ENCODE measurements at regions of chr7 and their contacts with region 1.

Region 1: GRCh38 chr7:79452032-79452494 is 1.4 kb downstream of the MAGI2 start:
- DNase-seq: peak; percentile 89 to 95 (median 95)
- ATAC-seq: peak; percentile 86 to 88
- H3K4me3 ChIP-seq: peak overlapping the region; percentile 62
- H3K27ac ChIP-seq: peak overlapping the region; percentile 89
- H3K4me1 ChIP-seq: peaks cover 4% of the 10 kb centered on the region
- H3K27me3 ChIP-seq: no peaks in the 10 kb centered on the region

Region 2: GRCh38 chr7:79308192-79308591 is 143.9 kb before region 1 on chr7:
- intact Hi-C with region 1: loop called in 1 of 4 experiments (anchors 10 kb)
- DNase-seq: no peak
- ATAC-seq: peak; percentile 64 to 72
- H3K4me3 ChIP-seq: no peak overlapping the region
- H3K27ac ChIP-seq: no peak overlapping the region
- H3K4me1 ChIP-seq: no peaks in the 10 kb centered on the region
- H3K27me3 ChIP-seq: no peaks in the 10 kb centered on the region

Region 3: GRCh38 chr7:79412915-79413314 is 39.1 kb before region 1 on chr7:
- intact Hi-C with region 1: loop called in 1 of 4 experiments (anchors 2 kb)
- DNase-seq: no peak
- ATAC-seq: no peak
- H3K4me3 ChIP-seq: no peak overlapping the region
- H3K27ac ChIP-seq: no peak overlapping the region
- H3K4me1 ChIP-seq: peaks cover 2% of the 10 kb centered on the region
- H3K27me3 ChIP-seq: no peaks in the 10 kb centered on the region